IMR-90 (cell line): ENCODE measurements at regions of chr14 and their contacts with region 1.

Region 1: GRCh38 chr14:79278798-79279644 is 932.3 kb downstream of the DIO2 start:
- DNase-seq: peak; percentile 92
- ATAC-seq: peak; percentile 100
- H3K4me3 ChIP-seq: peak overlapping the region; percentile 88
- H3K27ac ChIP-seq: no peak overlapping the region
- H3K4me1 ChIP-seq: peaks cover 1% of the 10 kb centered on the region; the same call in 1 of the 2 replicates
- H3K27me3 ChIP-seq: peaks cover 20% of the 10 kb centered on the region
- CTCF ChIP-seq: no peak
- POLR2A ChIP-seq: no peak
- RAD21 ChIP-seq: no peak; the same call in 1 of the 2 replicates

Region 2: GRCh38 chr14:78885884-78886283 is 393.1 kb before region 1 on chr14:
- CTCF ChIA-PET with region 1: no interaction called
- POLR2A ChIA-PET with region 1: no interaction called
- dilution Hi-C with region 1: no loop called
- in situ Hi-C with region 1: no loop called
- intact Hi-C with region 1: no loop called
- DNase-seq: no peak
- ATAC-seq: no peak
- H3K4me3 ChIP-seq: no peak overlapping the region
- H3K27ac ChIP-seq: no peak overlapping the region
- H3K4me1 ChIP-seq: no peaks in the 10 kb centered on the region
- H3K27me3 ChIP-seq: no peaks in the 10 kb centered on the region
- CTCF ChIP-seq: no peak
- POLR2A ChIP-seq: no peak
- RAD21 ChIP-seq: no peak

Region 3: DNA sequence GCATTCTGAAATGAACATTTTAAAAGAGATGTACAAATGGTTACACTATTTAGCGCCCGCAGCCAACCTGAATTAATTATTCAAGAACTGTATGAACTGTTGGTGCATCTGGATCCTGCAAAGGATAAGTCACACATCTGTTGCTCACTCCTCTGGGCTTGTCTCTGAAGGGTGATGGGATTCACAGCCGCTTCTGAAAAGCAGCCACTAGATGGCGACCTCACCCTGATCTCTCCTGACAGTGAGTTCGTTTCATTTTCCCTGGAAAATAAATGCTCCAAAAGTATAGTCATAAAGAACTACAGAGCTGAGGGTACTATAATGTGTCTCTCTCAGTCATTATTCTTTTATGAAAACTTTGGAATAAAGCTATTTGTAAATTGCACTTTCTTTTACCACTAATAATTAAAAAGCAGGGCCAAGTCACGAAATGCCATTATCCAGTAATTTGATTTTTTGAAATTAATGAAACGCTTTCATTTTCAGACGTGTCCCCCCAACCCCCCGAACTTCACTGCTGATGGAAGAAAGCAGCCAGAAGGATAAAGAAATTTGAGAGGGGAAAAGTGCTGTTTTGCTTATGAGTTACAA is 319.3 kb before region 1 on chr14:
- CTCF ChIA-PET with region 1: no interaction called
- POLR2A ChIA-PET with region 1: no interaction called
- dilution Hi-C with region 1: no loop called
- in situ Hi-C with region 1: no loop called
- intact Hi-C with region 1: loop called (anchors 5 kb)
- DNase-seq: peak; percentile 82
- ATAC-seq: peak; percentile 97
- H3K4me3 ChIP-seq: no peak overlapping the region
- H3K27ac ChIP-seq: no peak overlapping the region
- H3K4me1 ChIP-seq: no peaks in the 10 kb centered on the region
- H3K27me3 ChIP-seq: no peaks in the 10 kb centered on the region
- CTCF ChIP-seq: peak; percentile 87
- POLR2A ChIP-seq: no peak
- RAD21 ChIP-seq: peak; percentile 86

Region 4: GRCh38 chr14:79167960-79168359 is 111.1 kb before region 1 on chr14:
- CTCF ChIA-PET with region 1: no interaction called
- POLR2A ChIA-PET with region 1: no interaction called
- dilution Hi-C with region 1: no loop called
- in situ Hi-C with region 1: no loop called
- intact Hi-C with region 1: no loop called
- DNase-seq: peak; percentile 43
- ATAC-seq: no peak
- H3K4me3 ChIP-seq: no peak overlapping the region
- H3K27ac ChIP-seq: no peak overlapping the region
- H3K4me1 ChIP-seq: no peaks in the 10 kb centered on the region
- H3K27me3 ChIP-seq: no peaks in the 10 kb centered on the region; the same call in 1 of the 2 replicates
- CTCF ChIP-seq: no peak
- POLR2A ChIP-seq: no peak
- RAD21 ChIP-seq: no peak

Region 5: DNA sequence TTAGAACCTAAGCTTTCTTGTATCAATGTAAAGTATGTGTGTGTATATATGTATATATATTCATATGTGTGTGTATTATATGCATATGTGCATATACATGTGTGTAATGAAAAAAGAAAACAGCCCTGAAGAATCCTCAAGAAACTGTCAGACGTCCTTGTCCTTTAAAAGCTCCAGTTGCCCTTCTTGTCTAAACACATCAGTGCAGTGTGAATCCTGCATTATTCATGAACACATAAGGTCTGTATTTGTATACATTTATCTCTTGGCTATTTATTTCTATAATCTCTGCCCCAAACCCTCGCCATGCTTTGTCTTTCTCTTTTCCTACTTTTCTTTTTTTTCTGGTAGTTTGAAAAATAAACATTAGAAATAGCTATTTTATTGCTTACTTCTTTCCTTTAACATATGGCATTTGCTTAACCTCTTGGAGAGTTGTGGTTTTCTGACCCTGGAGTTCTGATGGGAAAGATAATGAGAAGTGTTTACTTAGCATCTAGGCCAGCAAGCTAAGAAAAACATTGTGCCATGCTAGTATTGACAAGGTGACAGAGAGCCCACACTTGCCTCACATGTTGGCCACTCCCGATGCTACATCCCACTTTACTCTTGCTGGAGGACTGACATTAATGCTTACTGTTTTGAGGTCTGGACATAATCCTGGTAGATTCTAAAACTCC is 45.9 kb after region 1 on chr14:
- CTCF ChIA-PET with region 1: no interaction called
- POLR2A ChIA-PET with region 1: no interaction called
- dilution Hi-C with region 1: no loop called
- in situ Hi-C with region 1: no loop called
- intact Hi-C with region 1: no loop called
- DNase-seq: peak; percentile 7
- ATAC-seq: peak; percentile 54
- H3K4me3 ChIP-seq: no peak overlapping the region
- H3K27ac ChIP-seq: no peak overlapping the region
- H3K4me1 ChIP-seq: peaks cover 7% of the 10 kb centered on the region
- H3K27me3 ChIP-seq: no peaks in the 10 kb centered on the region
- CTCF ChIP-seq: no peak
- POLR2A ChIP-seq: no peak
- RAD21 ChIP-seq: no peak

Region 6: DNA sequence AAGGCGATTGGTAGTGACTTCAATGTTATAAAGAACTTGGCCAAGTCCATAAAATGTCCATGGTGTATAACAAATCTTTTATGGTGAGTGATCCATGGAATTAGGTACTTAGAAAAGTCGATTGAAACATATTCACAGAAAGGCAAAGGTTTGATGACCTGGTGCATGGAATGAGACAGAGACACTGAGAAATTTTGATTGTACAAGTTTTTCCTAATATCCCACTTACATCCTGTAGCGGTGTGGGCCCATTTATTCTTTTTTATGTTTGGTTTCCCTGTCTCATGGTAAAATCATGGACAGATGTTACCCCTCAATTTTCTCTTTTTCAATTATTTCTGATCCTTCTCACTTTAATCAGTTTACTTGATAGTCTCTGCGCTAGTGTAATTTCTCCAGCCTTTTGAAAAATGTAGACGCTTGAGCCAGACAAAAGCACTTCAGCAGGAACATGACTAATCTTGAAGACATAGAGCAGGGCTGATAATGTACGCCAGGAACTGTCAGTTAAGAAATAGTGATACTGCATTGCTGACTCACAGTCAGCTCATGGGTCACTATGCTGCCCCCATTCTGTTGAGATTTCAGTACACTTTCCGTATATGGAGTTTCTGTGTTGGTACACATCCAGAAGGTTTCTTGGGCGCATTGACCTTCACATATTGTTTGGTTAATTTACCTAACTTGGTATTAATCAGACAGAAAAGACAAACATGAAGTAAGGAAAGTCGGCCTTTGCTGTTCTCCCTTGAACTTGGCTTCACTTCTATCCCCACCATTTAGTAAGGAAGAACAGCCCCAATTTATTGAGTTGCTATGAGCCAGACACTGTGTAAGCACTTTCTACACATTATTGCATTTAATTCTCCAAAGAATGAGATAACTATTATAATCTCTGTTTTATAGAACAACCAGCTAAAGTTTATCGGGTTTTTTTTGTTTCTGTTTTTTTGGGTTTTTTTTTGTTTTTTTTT is 90.6 kb after region 1 on chr14:
- CTCF ChIA-PET with region 1: no interaction called
- POLR2A ChIA-PET with region 1: no interaction called
- dilution Hi-C with region 1: no loop called
- in situ Hi-C with region 1: no loop called
- intact Hi-C with region 1: loop called (anchors 1 kb)
- DNase-seq: peak; percentile 99
- ATAC-seq: peak; percentile 99
- H3K4me3 ChIP-seq: no peak overlapping the region
- H3K27ac ChIP-seq: no peak overlapping the region
- H3K4me1 ChIP-seq: peaks cover 2% of the 10 kb centered on the region; the same call in 1 of the 2 replicates
- H3K27me3 ChIP-seq: no peaks in the 10 kb centered on the region
- CTCF ChIP-seq: peak; percentile 34
- POLR2A ChIP-seq: no peak
- RAD21 ChIP-seq: no peak; the same call in 1 of the 2 replicates

Region 7: DNA sequence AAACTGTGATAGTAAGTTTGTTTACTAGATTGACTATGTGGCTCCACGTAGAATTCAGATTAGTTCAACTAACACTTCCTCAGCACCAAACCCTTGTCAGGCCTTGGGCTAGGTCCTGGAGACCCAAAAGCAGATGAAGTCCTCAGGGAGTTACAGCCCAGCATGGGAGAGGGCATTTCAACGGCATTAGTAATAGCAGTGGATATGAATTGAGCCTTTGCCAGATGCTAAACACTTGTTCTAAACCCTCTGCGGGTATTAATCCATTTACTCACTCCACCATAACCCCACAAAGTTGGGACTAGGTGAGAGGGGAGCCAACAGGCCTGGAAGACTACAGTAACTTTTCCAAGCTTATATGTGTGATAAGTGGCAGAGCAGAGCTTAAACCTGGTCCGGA is 217.7 kb after region 1 on chr14:
- CTCF ChIA-PET with region 1: no interaction called
- POLR2A ChIA-PET with region 1: no interaction called
- dilution Hi-C with region 1: no loop called
- in situ Hi-C with region 1: no loop called
- intact Hi-C with region 1: no loop called
- DNase-seq: peak; percentile 10
- ATAC-seq: no peak; the same call in 1 of the 2 replicates
- H3K4me3 ChIP-seq: no peak overlapping the region
- H3K27ac ChIP-seq: no peak overlapping the region
- H3K4me1 ChIP-seq: no peaks in the 10 kb centered on the region
- H3K27me3 ChIP-seq: no peaks in the 10 kb centered on the region
- CTCF ChIP-seq: no peak
- POLR2A ChIP-seq: no peak
- RAD21 ChIP-seq: no peak

Region 8: GRCh38 chr14:79543971-79544697 is 265.1 kb after region 1 on chr14:
- CTCF ChIA-PET with region 1: no interaction called
- POLR2A ChIA-PET with region 1: no interaction called
- dilution Hi-C with region 1: no loop called
- in situ Hi-C with region 1: no loop called
- intact Hi-C with region 1: loop called (anchors 5 kb)
- DNase-seq: peak; percentile 66
- ATAC-seq: peak; percentile 30; the same call in 1 of the 2 replicates
- H3K4me3 ChIP-seq: no peak overlapping the region
- H3K27ac ChIP-seq: no peak overlapping the region
- H3K4me1 ChIP-seq: peaks cover 16% of the 10 kb centered on the region; the same call in 1 of the 2 replicates
- H3K27me3 ChIP-seq: no peaks in the 10 kb centered on the region
- CTCF ChIP-seq: peak; percentile 67
- POLR2A ChIP-seq: no peak
- RAD21 ChIP-seq: peak; percentile 59

Region 9: DNA sequence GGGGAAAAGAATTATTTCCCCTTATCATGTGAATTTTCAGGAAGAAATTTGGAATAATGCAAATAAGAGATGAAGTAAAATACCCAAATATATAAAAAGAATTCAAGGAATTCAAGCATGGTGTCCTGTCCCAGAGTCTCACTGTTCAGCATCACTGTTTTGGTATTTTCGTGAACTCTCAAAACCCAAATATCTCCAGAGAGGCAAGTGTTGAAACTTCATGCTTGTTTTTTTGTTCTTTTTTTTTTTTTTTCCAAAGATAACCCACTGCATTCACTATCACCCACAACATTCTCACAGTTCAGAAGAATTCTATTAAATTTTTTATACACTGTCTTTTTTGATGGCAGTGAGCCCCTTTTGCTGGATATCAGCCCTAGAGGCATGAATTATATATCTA is 577.4 kb after region 1 on chr14:
- CTCF ChIA-PET with region 1: no interaction called
- POLR2A ChIA-PET with region 1: no interaction called
- dilution Hi-C with region 1: no loop called
- in situ Hi-C with region 1: no loop called
- intact Hi-C with region 1: loop called (anchors 10 kb)
- DNase-seq: peak; percentile 33
- ATAC-seq: no peak
- H3K4me3 ChIP-seq: no peak overlapping the region
- H3K27ac ChIP-seq: no peak overlapping the region
- H3K4me1 ChIP-seq: no peaks in the 10 kb centered on the region
- H3K27me3 ChIP-seq: no peaks in the 10 kb centered on the region
- CTCF ChIP-seq: no peak
- POLR2A ChIP-seq: no peak
- RAD21 ChIP-seq: no peak